ENCODE measurements at regions of chr19 and their contacts with region 1.

Region 1: GRCh38 chr19:46076951-46077816 is 36.4 kb upstream of the IGFL4 start:
- DNase-seq: peak; percentile 83
- ATAC-seq: peak; percentile 91
- H3K4me3 Mint-ChIP-seq: peak overlapping the region; percentile 84
- H3K27ac Mint-ChIP-seq: no peak overlapping the region
- H3K4me1 Mint-ChIP-seq: peaks cover 2% of the 10 kb centered on the region
- H3K27me3 Mint-ChIP-seq: peaks cover 83% of the 10 kb centered on the region
- CTCF ChIP-seq: peak; percentile 75

Region 2: DNA sequence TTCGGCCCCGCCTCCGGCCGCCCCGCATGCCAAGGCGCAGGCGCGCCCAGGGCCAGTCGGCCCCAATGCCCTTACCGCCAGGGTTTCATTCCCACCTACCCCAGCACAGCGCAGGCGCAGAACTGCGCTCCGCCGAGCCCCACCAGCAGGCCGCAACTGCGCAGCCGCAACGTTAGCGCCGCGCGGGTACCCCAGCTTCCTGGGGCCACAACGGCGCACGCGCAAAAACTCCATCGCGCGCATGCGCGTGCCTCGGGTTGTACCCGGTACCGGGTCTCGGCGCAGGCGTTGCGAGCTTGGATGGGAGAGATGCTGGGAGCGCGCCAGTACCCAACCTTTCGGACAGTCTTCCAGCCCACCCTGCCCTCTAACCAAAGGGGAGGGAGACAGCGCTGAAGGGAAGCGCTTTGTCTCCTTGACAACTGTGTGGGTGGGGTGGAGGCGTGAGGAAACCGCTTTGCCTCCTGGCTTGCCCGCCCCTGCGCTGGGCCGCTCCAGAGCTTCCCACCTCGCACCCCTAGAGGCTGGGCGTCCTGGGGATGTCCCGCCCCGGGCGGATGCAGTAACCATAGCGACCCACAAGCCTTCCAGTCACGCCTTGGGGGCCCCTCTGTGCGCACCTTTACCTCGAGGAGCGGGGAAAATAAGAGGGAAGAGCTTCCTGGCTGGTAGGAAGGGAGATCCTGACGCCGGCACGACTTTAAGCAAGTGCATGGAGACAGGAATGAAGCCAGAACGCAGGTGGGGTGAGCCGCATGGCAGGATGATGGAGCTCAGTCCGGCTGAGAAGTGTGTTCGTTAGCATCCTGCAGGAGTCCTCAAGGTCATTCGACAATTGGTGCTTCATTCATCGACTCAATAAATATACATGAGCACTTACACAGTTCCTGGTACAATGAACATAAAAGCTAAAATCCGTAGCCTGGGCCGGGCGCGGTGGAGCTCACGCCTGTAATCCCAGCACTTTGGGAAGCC is 174.2 kb before region 1 on chr19:
- CTCF ChIA-PET with region 1: interaction called, 22 read pairs
- POLR2A ChIA-PET with region 1: no interaction called
- DNase-seq: peak; percentile 99
- ATAC-seq: peak; percentile 84
- H3K4me3 Mint-ChIP-seq: peak overlapping the region; percentile 91
- H3K27ac Mint-ChIP-seq: peak overlapping the region; percentile 57; the same call in 1 of the 2 replicates
- H3K4me1 Mint-ChIP-seq: peaks cover 12% of the 10 kb centered on the region
- H3K27me3 Mint-ChIP-seq: peaks cover 25% of the 10 kb centered on the region
- CTCF ChIP-seq: no peak

Region 3: DNA sequence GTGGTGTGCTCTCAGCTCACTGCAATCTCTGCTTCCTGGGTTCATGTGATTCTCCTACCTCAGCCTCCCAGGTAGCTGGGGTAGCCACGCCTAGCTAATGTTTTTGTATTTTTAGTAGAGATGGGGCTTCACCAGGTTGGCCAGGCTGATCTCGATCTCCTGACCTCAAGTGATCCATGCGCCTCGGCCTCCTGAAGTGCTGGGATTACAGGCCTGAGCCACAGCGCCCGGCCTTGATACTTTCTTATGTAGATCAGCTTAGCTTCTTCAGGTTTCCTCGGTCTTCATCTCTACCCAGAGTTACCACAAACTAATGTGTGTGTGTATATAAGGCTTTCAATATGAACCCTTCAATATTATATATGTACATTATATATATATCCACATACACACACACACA is 91.9 kb before region 1 on chr19:
- CTCF ChIA-PET with region 1: no interaction called
- POLR2A ChIA-PET with region 1: no interaction called
- DNase-seq: no peak
- ATAC-seq: no peak
- H3K4me3 Mint-ChIP-seq: no peak overlapping the region
- H3K27ac Mint-ChIP-seq: no peak overlapping the region
- H3K4me1 Mint-ChIP-seq: peaks cover 11% of the 10 kb centered on the region
- H3K27me3 Mint-ChIP-seq: peaks cover 23% of the 10 kb centered on the region
- CTCF ChIP-seq: no peak

Region 4: GRCh38 chr19:46009530-46010510 is 67.4 kb before region 1 on chr19:
- CTCF ChIA-PET with region 1: interaction called, 31 read pairs
- POLR2A ChIA-PET with region 1: interaction called, 3 read pairs
- DNase-seq: peak; percentile 89
- ATAC-seq: peak; percentile 90
- H3K4me3 Mint-ChIP-seq: no peak overlapping the region
- H3K27ac Mint-ChIP-seq: no peak overlapping the region
- H3K4me1 Mint-ChIP-seq: peaks cover 5% of the 10 kb centered on the region
- H3K27me3 Mint-ChIP-seq: peaks cover 14% of the 10 kb centered on the region
- CTCF ChIP-seq: peak; percentile 97

Region 5: DNA sequence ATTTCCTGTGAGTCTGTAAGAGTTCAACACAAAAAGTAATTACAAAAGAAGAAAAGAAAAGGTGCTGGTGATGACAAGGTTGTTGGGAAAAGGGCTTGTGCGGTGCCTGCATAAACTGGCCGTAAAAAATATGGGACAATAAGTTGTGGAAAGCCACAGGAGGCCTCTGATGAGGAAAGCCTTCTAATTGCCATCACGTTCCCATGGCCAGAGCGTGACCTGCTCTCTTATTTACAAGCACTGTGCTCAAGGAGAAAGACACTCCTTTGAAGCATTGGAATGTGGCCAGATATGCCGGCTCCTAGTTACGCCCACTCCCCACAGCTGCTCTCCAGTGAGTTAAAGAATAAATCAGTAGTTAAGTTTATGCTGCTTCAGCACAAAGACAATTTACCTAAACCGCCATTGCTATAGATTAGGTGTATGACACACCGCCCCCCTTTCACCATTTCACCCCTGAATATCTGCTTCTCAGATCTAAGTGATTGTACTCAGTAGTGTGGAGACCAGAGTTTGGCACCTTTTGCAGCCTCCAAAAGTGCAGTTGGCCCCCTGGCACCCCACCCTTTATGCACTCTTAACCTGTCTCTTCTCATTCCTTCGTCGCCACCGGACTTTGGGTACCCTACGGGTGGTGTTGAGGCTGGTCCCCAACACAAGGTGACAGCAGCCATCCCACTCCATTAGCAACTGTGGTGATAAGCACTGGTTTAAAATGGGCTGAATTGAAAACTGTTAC is 46.2 kb before region 1 on chr19:
- CTCF ChIA-PET with region 1: interaction called, 173 read pairs
- POLR2A ChIA-PET with region 1: interaction called, 4 read pairs
- DNase-seq: no peak
- ATAC-seq: no peak
- H3K4me3 Mint-ChIP-seq: no peak overlapping the region
- H3K27ac Mint-ChIP-seq: no peak overlapping the region
- H3K4me1 Mint-ChIP-seq: no peaks in the 10 kb centered on the region
- H3K27me3 Mint-ChIP-seq: no peaks in the 10 kb centered on the region; the same call in 1 of the 2 replicates
- CTCF ChIP-seq: no peak

Region 6: DNA sequence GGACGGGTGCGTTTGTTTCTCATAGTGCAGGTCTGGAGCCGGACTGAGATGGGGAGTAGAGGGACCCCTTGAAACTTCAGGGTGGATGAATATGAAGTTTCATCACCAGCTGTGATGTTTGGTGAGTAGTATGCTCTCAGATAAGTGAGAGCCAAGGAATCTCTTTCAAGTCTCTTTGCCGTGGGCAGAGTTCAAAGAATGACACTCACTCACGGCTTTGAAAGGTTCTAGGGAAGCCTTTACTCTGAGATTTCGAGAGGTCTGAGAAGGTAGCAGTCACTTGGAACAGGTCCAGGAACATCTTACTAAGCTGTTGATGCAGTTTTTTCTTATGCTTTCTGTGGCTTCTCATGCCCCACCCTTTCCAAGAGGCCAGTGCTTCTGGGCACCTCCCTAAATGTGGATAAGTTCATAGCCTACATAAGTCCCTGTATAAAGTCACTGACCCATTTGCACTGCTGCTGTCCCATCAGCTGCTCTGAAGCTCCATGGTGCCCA is 70.7 kb after region 1 on chr19 and contains the start of gene IGFL2:
- CTCF ChIA-PET with region 1: no interaction called
- POLR2A ChIA-PET with region 1: no interaction called
- DNase-seq: no peak
- ATAC-seq: no peak
- H3K4me3 Mint-ChIP-seq: no peak within 1 kb of the TSS
- H3K27ac Mint-ChIP-seq: no peak within 1 kb of the TSS
- H3K4me1 Mint-ChIP-seq: 0 out of 2 replicates have a peak, but pooled peaks cover 6% of the 10 kb centered on the region
- H3K27me3 Mint-ChIP-seq: peaks cover 18% of the 10 kb centered on the region
- CTCF ChIP-seq: no peak
- total RNA-seq, gene IGFL2: not detected in 3 replicates

Region 7: GRCh38 chr19:46265217-46265828 is 188.1 kb after region 1 on chr19:
- CTCF ChIA-PET with region 1: interaction called, 154 read pairs
- POLR2A ChIA-PET with region 1: interaction called, 3 read pairs
- DNase-seq: peak; percentile 76
- ATAC-seq: peak; percentile 92
- H3K4me3 Mint-ChIP-seq: no peak overlapping the region
- H3K27ac Mint-ChIP-seq: no peak overlapping the region
- H3K4me1 Mint-ChIP-seq: peaks cover 10% of the 10 kb centered on the region
- H3K27me3 Mint-ChIP-seq: no peaks in the 10 kb centered on the region; the same call in 1 of the 2 replicates
- CTCF ChIP-seq: peak; percentile 86

Measured in WTC11 (cell line).